Endothelial cell of umbilical vein (primary cell): ENCODE measurements at regions of chr20 and their contacts with region 1.

Region 1: DNA sequence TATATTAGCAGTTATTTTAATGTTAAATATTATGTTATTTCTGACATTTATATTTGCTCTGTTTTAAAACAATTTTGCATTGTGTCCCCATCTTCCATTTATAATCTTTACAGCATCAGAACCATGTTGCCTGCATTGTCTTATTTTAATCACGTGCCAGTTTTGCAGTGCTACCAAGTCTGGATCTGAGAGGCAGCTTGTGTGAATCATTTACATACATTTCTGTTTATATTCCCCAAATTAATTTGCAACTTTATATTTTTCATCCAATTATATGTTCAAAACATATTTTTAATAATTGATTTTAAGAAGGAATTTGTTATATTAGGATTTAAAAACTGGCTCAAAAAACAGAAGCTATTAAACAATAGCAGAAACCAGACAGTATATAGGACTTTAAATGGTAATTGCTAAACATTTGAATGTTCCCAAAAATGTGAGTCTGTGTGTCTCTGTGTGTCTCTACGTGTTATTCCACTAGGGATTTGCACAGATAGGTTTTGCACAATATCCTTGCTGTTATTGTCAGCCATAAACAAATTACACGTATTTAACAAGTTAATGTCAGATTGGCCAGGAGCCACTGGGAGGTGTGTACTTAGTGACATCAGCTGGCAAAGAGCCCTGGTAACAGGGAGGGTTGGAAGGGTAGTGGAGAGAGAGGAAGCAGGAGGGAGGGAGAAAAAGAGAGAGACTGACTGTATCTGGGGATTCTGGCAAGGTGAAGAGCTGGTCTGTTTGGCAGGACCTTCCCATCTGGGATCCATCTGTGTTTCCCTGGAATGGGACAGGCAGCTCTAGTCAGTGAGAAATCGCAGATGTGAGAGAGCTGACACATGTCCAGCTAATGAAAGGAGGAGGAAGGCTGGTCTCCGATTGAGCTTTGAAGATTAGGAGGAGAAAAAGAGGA is 72.1 kb downstream of the CBFA2T2 start:
- DNase-seq: peak; percentile 93
- H3K4me3 ChIP-seq: no peak overlapping the region
- H3K27ac ChIP-seq: no peak overlapping the region
- H3K4me1 ChIP-seq: peaks cover 11% of the 10 kb centered on the region
- H3K27me3 ChIP-seq: no peaks in the 10 kb centered on the region
- CTCF ChIP-seq: no peak
- POLR2A ChIP-seq: no peak

Region 2: DNA sequence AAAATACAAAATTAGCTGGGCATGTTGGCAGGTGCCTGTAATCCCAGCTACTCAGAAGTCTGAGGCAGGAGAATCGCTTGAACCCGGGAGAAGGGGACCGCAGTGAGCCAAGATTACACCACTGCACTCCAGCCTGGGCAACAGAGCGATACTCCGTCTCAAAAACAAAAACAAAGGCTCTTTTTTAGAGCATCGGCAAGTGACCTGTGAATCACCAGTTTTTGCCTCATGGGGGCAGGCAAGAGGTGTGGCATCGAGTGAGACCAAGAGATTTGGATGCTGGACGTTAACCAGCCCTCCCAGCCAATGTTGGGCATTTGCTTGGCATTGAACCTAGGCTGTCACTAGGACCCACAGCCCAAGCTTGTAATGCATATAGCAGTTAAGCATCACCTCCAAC is 146.0 kb before region 1 on chr20:
- CTCF ChIA-PET with region 1: no interaction called
- POLR2A ChIA-PET with region 1: no interaction called
- dilution Hi-C with region 1: no loop called
- intact Hi-C with region 1: no loop called
- DNase-seq: no peak
- H3K4me3 ChIP-seq: no peak overlapping the region
- H3K27ac ChIP-seq: no peak overlapping the region
- H3K4me1 ChIP-seq: no peaks in the 10 kb centered on the region
- H3K27me3 ChIP-seq: no peaks in the 10 kb centered on the region
- CTCF ChIP-seq: peak; percentile 13 to 49
- POLR2A ChIP-seq: no peak

Region 3: DNA sequence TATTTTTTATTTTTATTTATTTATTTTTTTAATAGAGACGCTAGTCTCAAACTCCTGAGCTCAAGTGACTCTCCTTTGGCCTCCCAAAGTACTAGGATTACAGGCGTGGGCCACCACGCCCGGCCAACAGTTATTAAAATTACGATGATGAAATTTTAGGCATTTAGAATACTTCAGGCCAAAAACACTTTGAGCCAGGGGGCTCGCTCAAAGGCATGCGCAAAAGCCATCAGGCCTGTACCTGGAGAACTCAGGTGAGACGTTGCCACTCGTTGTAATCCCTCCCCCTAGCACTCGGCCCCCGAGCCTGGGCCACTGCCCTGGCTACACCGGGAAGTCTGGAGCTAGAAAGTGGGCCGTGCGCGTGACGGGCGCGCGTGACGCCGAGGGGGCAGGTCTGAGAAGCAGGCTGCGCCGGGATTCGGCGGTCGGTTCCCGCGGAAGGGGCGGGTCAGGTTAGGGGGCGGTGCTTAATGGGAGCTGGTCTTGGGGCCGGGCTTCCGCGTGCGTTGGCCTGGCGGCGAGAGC is 72.4 kb before region 1 on chr20:
- CTCF ChIA-PET with region 1: no interaction called
- POLR2A ChIA-PET with region 1: no interaction called
- dilution Hi-C with region 1: no loop called
- intact Hi-C with region 1: loop called (anchors 10 kb)
- DNase-seq: peak; percentile 96
- H3K4me3 ChIP-seq: peak overlapping the region; percentile 54 to 79 (median 58)
- H3K27ac ChIP-seq: peak overlapping the region; percentile 79
- H3K4me1 ChIP-seq: peaks cover 6% of the 10 kb centered on the region
- H3K27me3 ChIP-seq: no peaks in the 10 kb centered on the region
- CTCF ChIP-seq: no peak
- POLR2A ChIP-seq: peak; percentile 96

Region 4: GRCh38 chr20:33515569-33516216 is 46.3 kb before region 1 on chr20:
- CTCF ChIA-PET with region 1: interaction called, 4 read pairs
- POLR2A ChIA-PET with region 1: interaction called, 4 read pairs
- dilution Hi-C with region 1: no loop called
- intact Hi-C with region 1: loop called (anchors 5 kb)
- DNase-seq: no peak
- H3K4me3 ChIP-seq: no peak overlapping the region
- H3K27ac ChIP-seq: no peak overlapping the region
- H3K4me1 ChIP-seq: peaks cover 19% of the 10 kb centered on the region
- H3K27me3 ChIP-seq: no peaks in the 10 kb centered on the region
- CTCF ChIP-seq: peak in 1 of 2 donors; percentile 11
- POLR2A ChIP-seq: no peak

Region 5: DNA sequence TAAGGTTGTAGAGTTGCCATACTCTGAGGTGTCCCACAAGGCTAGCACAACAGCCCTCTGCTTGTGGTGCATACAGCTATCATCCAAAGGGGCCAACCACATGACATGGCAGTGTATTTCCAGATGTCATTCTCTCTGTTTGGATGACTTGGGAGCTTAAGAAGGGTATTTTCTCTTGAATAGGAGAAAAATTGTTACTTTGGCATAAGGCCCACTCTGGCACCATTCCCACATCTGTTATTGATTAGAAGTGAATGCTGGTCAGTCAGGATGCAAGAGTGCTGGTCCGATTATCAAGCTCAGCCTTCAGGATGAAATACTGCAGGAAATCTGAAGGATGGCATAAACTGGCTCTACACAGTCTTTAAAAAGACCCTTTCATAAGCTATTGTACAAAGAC is 16.6 kb after region 1 on chr20:
- CTCF ChIA-PET with region 1: no interaction called
- POLR2A ChIA-PET with region 1: no interaction called
- dilution Hi-C with region 1: no loop called
- intact Hi-C with region 1: no loop called
- DNase-seq: no peak
- H3K4me3 ChIP-seq: no peak overlapping the region
- H3K27ac ChIP-seq: no peak overlapping the region
- H3K4me1 ChIP-seq: no peaks in the 10 kb centered on the region
- H3K27me3 ChIP-seq: no peaks in the 10 kb centered on the region
- CTCF ChIP-seq: no peak
- POLR2A ChIP-seq: no peak

Region 6: DNA sequence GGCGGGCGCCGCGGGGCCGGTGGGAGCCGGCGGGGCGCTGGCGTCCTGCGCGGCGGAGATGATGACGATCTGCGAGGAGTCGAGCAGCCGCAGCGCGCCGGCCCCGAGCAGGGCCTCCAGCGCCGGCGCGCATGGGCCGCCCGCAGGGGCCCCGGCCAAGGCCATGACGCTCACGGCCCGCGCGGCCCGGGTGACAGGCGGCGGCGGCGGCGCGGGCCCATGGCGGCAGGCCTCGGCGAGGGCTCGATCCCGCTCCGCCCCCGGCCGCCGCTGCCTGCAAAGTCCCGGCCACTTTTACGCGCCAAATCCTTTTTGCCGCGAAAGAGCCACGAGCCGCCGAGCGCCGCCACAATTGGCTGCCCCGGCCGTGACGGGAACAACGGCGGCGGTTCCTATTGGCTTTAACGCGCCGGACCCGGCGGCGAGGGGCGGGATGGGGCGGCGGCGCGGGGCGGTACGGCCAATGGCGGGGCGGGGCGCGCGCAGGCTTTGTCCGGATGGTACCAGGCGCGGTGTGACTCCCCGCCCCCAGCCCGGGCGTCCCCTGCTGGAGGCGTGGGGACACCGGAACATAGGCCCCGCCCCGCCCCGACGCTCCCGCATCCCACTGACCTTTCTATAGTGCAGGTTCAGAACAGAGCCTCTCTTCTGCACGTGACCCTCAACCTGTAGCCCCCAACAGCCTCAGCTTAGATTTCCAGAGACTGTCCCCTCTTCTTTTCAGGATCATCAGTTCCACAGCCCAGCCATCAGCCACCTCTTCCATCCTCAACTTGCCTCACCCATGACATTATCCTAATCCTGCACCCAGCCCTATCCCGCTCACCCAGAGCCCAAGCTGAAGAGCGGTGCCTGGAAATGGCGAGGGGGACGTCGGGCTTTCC is 124.4 kb after region 1 on chr20 and contains the start of gene E2F1:
- CTCF ChIA-PET with region 1: no interaction called
- POLR2A ChIA-PET with region 1: no interaction called
- dilution Hi-C with region 1: no loop called
- intact Hi-C with region 1: no loop called
- DNase-seq: peak; percentile 95
- H3K4me3 ChIP-seq: peak within 1 kb of the TSS; percentile 4 to 50 (median 11)
- H3K27ac ChIP-seq: peak within 1 kb of the TSS; percentile 15
- H3K4me1 ChIP-seq: peaks cover 36% of the 10 kb centered on the region
- H3K27me3 ChIP-seq: no peaks in the 10 kb centered on the region
- CTCF ChIP-seq: peak in 1 of 2 donors; percentile 30
- POLR2A ChIP-seq: no peak
- total RNA-seq, gene E2F1: 27.0 and 29.6 TPM in 2 replicates

Region 7: DNA sequence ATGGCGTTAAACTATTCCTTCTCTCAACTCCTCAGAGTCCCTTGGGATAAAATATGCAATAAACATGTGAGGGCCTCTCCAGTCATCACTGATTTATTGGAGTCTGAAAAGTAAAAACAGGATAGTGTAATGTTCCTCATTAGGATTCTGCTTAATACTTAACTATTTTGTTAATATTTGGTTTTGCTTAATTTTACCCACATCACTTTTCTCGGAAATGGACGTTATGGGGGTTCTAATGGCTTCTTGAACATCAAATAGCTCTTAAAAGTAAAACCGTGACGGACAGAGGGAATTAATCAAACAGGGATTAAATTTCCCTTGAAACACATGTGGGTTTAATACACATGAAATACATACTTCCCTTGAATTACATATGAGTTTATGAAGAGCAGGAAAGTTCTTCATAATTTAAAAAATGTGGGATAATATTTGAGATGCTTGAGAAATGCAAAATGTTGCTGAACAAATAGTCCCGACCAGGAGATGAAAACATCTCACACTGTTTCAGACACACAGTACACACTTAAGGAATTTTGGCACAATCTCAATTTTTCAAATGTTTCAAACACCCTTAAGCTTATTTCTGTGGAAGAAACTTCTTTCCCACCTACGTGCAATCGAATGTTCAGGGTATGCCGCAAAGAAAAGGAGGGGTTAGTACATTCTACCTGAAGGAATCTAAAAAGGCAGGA is 588.5 kb after region 1 on chr20:
- CTCF ChIA-PET with region 1: no interaction called
- POLR2A ChIA-PET with region 1: no interaction called
- dilution Hi-C with region 1: no loop called
- intact Hi-C with region 1: no loop called
- DNase-seq: no peak
- H3K4me3 ChIP-seq: no peak overlapping the region
- H3K27ac ChIP-seq: no peak overlapping the region
- H3K4me1 ChIP-seq: no peaks in the 10 kb centered on the region
- H3K27me3 ChIP-seq: peaks cover 0 to 4% of the 10 kb centered on the region in 2 experiments
- CTCF ChIP-seq: no peak
- POLR2A ChIP-seq: no peak